ENCODE measurements at regions of chr14 and their contacts with region 1.

Region 1: GRCh38 chr14:54814076-54814475 is 88.5 kb downstream of the GCH1 start:
- DNase-seq: no peak
- ATAC-seq: no peak
- H3K4me3 ChIP-seq: no peak overlapping the region
- H3K27ac ChIP-seq: no peak overlapping the region
- H3K4me1 ChIP-seq: no peaks in the 10 kb centered on the region
- H3K27me3 ChIP-seq: peaks cover 0 to 2% (median 0%) of the 10 kb centered on the region in 9 donors
- CTCF ChIP-seq: no peak
- POLR2A ChIP-seq: no peak

Region 2: GRCh38 chr14:54267172-54267571 is 546.9 kb before region 1 on chr14:
- intact Hi-C with region 1: no loop called
- DNase-seq: no peak
- ATAC-seq: no peak
- H3K4me3 ChIP-seq: no peak overlapping the region
- H3K27ac ChIP-seq: no peak overlapping the region
- H3K4me1 ChIP-seq: no peaks in the 10 kb centered on the region
- H3K27me3 ChIP-seq: no peaks in the 10 kb centered on the region
- CTCF ChIP-seq: no peak
- POLR2A ChIP-seq: no peak

Region 3: GRCh38 chr14:54532111-54533012 is 281.7 kb before region 1 on chr14:
- intact Hi-C with region 1: no loop called
- DNase-seq: no peak
- ATAC-seq: no peak
- H3K4me3 ChIP-seq: no peak overlapping the region
- H3K27ac ChIP-seq: no peak overlapping the region
- H3K4me1 ChIP-seq: peaks cover 0 to 12% (median 2%) of the 10 kb centered on the region in 12 donors
- H3K27me3 ChIP-seq: no peaks in the 10 kb centered on the region
- CTCF ChIP-seq: no peak
- POLR2A ChIP-seq: no peak

Region 4: DNA sequence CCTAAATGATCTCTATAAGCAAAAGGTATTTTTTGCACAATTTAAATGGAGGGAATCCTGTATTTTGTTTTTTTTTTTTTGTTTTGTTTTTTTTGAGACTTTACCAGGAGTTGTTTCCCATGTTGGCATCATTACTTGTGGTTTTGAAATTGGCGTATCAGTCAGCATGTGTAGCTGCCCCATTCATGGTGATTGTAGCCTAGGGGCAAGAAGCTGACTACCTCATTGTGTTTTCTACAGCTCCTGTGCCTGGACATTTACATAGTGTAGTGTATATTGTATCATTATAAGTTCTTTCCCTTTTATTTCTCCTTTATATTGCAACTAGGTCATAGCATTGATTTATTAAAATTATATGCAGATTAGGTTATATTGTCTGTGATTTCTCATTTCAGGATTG is 222.6 kb before region 1 on chr14:
- intact Hi-C with region 1: no loop called
- DNase-seq: no peak
- ATAC-seq: no peak
- H3K4me3 ChIP-seq: no peak overlapping the region
- H3K27ac ChIP-seq: no peak overlapping the region
- H3K4me1 ChIP-seq: peaks cover 3 to 59% (median 33%) of the 10 kb centered on the region in 12 donors
- H3K27me3 ChIP-seq: no peaks in the 10 kb centered on the region
- CTCF ChIP-seq: no peak
- POLR2A ChIP-seq: no peak

Region 5: DNA sequence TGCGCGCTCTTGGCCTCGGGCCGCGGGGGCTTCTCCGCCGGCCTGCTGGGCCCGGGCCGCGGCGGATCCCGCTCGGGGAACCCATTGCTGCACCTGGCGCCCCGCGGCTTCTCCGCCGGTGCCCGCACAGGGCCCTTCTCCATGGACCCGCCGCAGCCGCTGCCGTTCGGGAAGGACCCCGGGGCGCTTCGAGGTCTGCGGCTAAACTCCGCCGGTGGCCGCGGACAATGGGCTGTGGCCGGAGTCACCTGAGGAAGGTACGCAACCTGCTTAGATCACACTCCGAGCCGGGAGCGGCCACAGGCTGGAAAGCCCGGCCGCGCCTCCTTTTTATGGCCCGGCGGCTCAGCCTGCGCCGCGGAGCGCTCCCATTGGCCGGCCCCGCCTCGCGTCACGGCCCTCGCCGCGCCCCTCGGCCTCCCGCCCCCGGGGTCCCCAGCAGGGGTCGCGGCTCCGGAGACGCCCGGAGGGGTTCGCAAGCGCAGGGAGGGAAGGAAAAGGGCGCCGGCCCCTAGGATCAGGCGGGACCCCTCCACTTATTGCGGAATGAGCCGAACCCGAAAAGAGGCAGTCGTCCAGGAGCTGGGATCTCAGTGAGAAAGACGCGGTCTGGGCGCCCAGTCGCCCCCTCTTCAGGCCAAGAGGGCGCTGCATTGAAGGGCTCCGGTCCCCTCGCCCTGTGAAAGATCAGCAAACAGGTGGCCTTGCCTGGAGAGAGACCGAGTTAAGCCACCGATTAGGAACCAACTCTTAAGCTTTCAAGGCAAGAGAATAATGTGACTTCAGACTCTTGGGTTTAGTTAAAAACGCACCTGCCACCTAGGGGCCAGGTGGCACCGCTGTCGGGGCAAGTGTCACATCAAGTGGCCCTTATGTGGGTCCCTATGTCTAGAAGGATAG is 88.7 kb after region 1 on chr14 and contains the start of gene GCH1:
- intact Hi-C with region 1: loop called in 4 of 10 experiments (anchors 5 to 10 kb)
- DNase-seq: peak; percentile 59 to 85 (median 76)
- ATAC-seq: peak; percentile 85 to 97 (median 93)
- H3K4me3 ChIP-seq: peak within 1 kb of the TSS; percentile 61 to 97 (median 82)
- H3K27ac ChIP-seq: peak within 1 kb of the TSS; percentile 62 to 91 (median 82)
- H3K4me1 ChIP-seq: peaks cover 0 to 29% (median 1%) of the 10 kb centered on the region in 12 donors
- H3K27me3 ChIP-seq: no peaks in the 10 kb centered on the region
- CTCF ChIP-seq: peak; percentile 36 to 75 (median 54)
- POLR2A ChIP-seq: peak in 1 of 2 donors; percentile 78
- total RNA-seq, gene GCH1: 1.6 to 13.8 (median 3.7) TPM